Mammary epithelial cell (primary cell): ENCODE measurements at regions of chr17 and their contacts with region 1.

Region 1: DNA sequence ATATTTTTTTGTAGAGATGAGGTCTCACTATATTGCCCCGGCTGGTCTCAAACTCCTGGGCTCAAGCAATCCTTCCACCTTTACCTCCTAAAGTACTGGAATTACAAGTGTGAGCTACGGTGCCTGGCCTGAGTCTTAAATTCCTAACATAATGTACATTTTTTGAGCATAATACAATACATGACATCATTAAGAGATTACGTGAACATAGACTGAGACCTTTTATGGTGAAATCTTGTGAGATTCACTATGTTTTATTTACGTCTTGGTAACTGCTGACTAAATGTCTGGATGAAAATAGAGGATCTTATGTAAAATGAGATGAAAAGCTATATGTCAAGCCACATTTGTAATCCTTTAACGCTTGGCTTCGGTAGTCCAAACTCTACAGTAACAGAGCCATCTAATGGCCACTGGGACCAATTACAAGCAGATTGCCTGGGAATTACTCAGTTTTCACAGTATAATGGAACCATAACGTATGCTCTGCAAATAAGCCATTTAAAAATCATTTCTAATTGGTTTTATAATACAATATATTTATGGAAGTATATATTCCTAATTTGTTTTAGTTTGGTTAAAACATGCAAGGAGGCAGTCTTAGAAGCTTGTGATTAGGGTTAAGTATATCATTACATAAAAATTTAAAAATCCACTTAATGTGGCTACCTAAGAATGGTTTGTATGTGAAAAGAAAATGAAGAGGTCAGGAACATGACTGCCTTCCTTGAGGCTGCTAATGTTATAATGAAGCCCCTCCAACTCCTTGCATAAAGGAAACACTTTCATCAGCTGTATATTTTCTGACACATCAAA is 8.1 kb upstream of the EFCAB13 start:
- DNase-seq: peak; percentile 81
- H3K4me3 ChIP-seq: no peak overlapping the region
- H3K27ac ChIP-seq: no peak overlapping the region
- H3K4me1 ChIP-seq: peaks cover 14% of the 10 kb centered on the region
- H3K27me3 ChIP-seq: no peaks in the 10 kb centered on the region
- CTCF ChIP-seq: peak; percentile 78 to 80

Region 2: GRCh38 chr17:46940621-46941404 is 374.8 kb before region 1 on chr17:
- CTCF ChIA-PET with region 1: no interaction called
- dilution Hi-C with region 1: no loop called
- in situ Hi-C with region 1: no loop called
- intact Hi-C with region 1: loop called (anchors 5 kb)
- DNase-seq: peak; percentile 49
- H3K4me3 ChIP-seq: no peak overlapping the region
- H3K27ac ChIP-seq: no peak overlapping the region
- H3K4me1 ChIP-seq: no peaks in the 10 kb centered on the region
- H3K27me3 ChIP-seq: no peaks in the 10 kb centered on the region
- CTCF ChIP-seq: peak; percentile 90 to 96

Region 3: GRCh38 chr17:47188876-47189731 is 126.6 kb before region 1 on chr17 and contains the start of gene CDC27:
- CTCF ChIA-PET with region 1: no interaction called
- dilution Hi-C with region 1: no loop called
- in situ Hi-C with region 1: no loop called
- intact Hi-C with region 1: loop called (anchors 1 kb)
- DNase-seq: peak; percentile 94
- H3K4me3 ChIP-seq: peak within 1 kb of the TSS; percentile 64 to 75 (median 70)
- H3K27ac ChIP-seq: peak within 1 kb of the TSS; percentile 85
- H3K4me1 ChIP-seq: no peaks in the 10 kb centered on the region
- H3K27me3 ChIP-seq: no peaks in the 10 kb centered on the region
- CTCF ChIP-seq: no peak
- total RNA-seq, gene CDC27: 80.7 to 128 TPM

Region 4: GRCh38 chr17:47253541-47254402 is 61.9 kb before region 1 on chr17 and contains the start of gene ITGB3:
- CTCF ChIA-PET with region 1: no interaction called
- dilution Hi-C with region 1: no loop called
- in situ Hi-C with region 1: no loop called
- intact Hi-C with region 1: loop called (anchors 1 kb)
- DNase-seq: peak; percentile 71
- H3K4me3 ChIP-seq: peak within 1 kb of the TSS; percentile 41 to 55 (median 54)
- H3K27ac ChIP-seq: no peak within 1 kb of the TSS
- H3K4me1 ChIP-seq: peaks cover 24% of the 10 kb centered on the region
- H3K27me3 ChIP-seq: peaks cover 11% of the 10 kb centered on the region
- CTCF ChIP-seq: peak in 1 of 2 donors; percentile 39
- total RNA-seq, gene ITGB3: 1.3 to 28.7 TPM

Region 5: GRCh38 chr17:47279062-47279736 is 36.5 kb before region 1 on chr17:
- CTCF ChIA-PET with region 1: no interaction called
- dilution Hi-C with region 1: no loop called
- in situ Hi-C with region 1: no loop called
- intact Hi-C with region 1: loop called (anchors 2 kb)
- DNase-seq: peak; percentile 99
- H3K4me3 ChIP-seq: no peak overlapping the region
- H3K27ac ChIP-seq: peak overlapping the region; percentile 56
- H3K4me1 ChIP-seq: peaks cover 53% of the 10 kb centered on the region
- H3K27me3 ChIP-seq: no peaks in the 10 kb centered on the region
- CTCF ChIP-seq: no peak